Right ventricle myocardium inferior (tissue), 1 donor: ENCODE measurements at regions of chrX and their contacts with region 1.

Region 1: DNA sequence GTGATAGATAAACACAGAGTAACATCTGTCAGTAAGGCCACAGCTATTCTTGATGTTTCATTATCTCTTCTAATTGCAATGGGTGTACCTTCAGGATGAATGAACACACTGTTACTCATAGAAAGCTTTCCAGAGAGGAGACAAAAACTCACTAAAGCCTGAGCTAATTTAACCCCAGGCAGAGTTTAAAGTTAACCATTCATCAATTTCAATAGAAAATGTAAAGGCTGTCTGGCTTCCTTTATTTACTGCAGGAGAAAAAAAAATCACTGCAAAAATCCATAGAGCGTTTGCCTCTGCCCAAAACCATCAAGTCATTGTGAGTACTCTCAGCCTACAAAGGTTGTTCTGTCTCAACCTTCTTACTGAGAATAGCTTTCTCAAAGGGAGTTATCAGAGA is 376.9 kb downstream of the PPP4R3C start:
- DNase-seq: no peak
- ATAC-seq: no peak

Region 2: DNA sequence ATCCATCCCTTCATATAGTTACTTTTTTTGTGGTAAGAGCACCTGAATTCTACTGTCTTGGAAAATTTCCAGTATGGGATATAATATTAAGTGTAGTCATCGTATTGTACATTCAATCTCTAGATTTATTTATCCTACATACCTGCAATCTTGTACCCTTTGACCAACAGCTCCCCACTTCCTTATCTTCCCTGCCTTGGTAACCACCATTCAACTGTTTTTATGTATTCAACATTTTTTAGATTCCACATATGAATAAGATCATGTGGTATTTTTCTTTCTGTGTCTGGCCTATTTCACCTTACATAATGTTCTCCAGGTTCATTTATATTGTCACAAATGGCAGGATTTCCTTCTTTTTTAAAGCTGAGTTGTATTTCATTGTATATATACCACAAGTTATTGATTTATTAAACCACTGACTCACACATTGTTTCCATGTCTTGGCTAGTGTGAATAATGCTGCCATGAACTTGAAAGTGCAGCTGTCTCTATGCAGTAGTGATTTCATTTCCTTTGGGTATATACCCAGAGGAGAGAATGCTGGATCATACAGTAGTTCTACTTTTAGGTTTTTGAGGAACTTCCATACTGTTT is 297.7 kb before region 1 on chrX:
- intact Hi-C with region 1: no loop called
- DNase-seq: no peak
- ATAC-seq: no peak

Region 3: GRCh38 chrX:27039332-27039731 is 46.9 kb before region 1 on chrX:
- intact Hi-C with region 1: no loop called
- DNase-seq: no peak
- ATAC-seq: no peak

Region 4: DNA sequence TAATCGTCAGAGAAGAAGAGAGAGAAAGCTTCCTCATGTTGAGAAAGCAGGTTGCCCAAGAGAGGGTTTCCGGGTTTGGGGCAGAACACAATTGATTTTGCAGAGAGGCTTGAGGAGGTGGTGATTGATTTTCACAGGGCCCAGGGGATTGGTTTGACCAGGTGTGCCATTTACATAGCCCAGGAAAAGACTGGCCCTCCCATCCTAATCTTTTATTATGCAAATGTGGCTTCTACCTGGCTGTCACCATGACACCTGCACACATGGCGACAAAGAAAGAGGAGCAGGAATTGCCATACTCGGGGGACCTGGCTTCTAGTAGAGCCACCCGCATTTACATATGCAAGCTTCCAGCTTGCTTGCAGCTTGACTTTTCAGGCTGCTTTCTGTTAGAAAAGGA is 28.4 kb before region 1 on chrX:
- intact Hi-C with region 1: loop called (anchors 2 kb)
- DNase-seq: no peak
- ATAC-seq: no peak

Region 5: GRCh38 chrX:27132862-27133261 is 46.6 kb after region 1 on chrX:
- intact Hi-C with region 1: no loop called
- DNase-seq: no peak
- ATAC-seq: no peak